ENCODE measurements at regions of chr20 and their contacts with region 1.

Region 1: DNA sequence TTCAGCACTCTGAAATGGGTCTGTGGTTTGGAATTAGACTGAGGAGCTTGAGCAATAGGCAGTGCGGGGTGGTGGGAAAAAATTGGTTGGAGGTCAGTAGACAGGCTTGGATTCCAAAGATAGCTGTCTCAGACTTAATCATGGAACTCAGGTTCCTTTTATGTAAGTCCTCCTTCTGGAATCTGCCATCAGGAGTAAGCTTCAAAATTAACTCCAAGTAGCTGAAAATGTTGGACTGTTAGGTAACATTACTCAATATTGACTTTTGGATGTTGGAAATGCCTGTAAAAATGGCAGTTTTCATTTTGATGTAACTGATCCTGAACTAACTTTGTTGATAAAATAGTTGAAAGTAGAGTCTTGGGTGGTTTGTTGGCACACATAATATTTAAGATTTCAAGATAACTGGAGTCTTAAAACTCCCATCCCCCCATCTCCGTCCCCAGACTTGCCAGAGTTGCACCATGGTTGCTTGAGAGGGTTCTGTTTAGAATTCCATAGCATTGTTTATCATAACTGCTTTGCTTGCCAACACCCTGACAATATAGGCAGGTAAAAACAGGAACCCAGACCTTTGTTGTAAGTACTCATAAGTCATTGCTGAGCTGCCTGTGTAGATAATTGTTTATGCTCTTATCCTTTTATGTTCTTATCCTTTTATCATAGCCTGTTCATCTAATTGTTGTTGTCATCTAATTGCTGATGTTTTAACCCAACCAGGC is 83.1 kb downstream of the PHF20 start:
- DNase-seq: no peak
- ATAC-seq: no peak
- H3K4me3 Mint-ChIP-seq: no peak overlapping the region
- H3K27ac Mint-ChIP-seq: peak overlapping the region in 6 of 10 donors; percentile 37 to 81 (median 55)
- H3K4me1 Mint-ChIP-seq: peaks cover 13 to 34% (median 24%) of the 10 kb centered on the region in 4 donors
- H3K27me3 Mint-ChIP-seq: no peaks in the 10 kb centered on the region

Region 2: DNA sequence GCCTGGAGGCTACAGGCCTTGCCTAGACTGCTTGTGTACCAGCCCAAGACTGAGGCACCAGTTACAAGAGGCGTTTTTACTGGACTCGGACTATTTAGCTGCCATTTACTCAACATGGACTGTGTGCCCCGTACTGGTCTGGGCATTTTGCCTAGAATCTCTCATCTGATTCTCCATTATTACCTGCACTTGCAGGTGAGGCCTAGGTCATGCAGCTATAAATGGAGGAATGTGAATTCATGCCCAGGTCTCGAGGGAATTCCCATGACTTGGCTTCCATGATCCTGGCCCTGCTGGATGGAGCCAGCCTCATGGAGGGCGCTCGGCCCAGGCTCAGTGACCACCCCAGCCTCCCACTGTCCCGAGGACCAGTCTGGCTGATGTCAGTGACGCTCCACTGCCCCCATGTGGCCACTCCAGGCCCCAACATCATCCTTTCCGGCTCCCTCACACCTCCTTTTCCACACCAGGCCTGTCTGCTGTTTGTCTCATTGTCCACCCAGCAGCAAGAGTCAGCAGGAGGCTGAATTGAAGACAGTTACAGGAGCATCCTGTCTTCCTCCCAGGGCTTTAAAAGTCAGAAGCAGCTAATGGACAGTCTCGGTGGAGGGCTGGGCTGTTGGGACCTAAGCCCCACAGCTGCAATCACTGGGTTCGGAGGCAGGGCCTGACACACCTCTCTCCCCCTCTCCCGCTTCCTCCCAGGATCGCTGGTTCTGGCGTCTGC is 585.7 kb before region 1 on chr20:
- POLR2A ChIA-PET with region 1: interaction called, 10 read pairs
- DNase-seq: peak in 7 of 10 donors; percentile 31 to 41 (median 38)
- ATAC-seq: peak; percentile 57 to 79
- H3K4me3 Mint-ChIP-seq: no peak overlapping the region
- H3K27ac Mint-ChIP-seq: peak overlapping the region in 4 of 10 donors; percentile 22 to 61 (median 48)
- H3K4me1 Mint-ChIP-seq: peaks cover 1 to 20% (median 18%) of the 10 kb centered on the region in 4 donors
- H3K27me3 Mint-ChIP-seq: no peaks in the 10 kb centered on the region